PC-9 (cell line): ENCODE measurements at regions of chr17 and their contacts with region 1.

Region 1: GRCh38 chr17:19362277-19363113 is at the start of gene B9D1:
- DNase-seq: peak; percentile 83 to 93
- H3K4me3 ChIP-seq: peak within 1 kb of the TSS; percentile 86
- H3K27ac ChIP-seq: peak within 1 kb of the TSS; percentile 85
- H3K4me1 ChIP-seq: peaks cover 13% of the 10 kb centered on the region
- H3K27me3 ChIP-seq: no peaks in the 10 kb centered on the region
- CTCF ChIP-seq: peak; percentile 97
- total RNA-seq, gene B9D1: 40.2 and 58.7 TPM in 2 replicates

Region 2: DNA sequence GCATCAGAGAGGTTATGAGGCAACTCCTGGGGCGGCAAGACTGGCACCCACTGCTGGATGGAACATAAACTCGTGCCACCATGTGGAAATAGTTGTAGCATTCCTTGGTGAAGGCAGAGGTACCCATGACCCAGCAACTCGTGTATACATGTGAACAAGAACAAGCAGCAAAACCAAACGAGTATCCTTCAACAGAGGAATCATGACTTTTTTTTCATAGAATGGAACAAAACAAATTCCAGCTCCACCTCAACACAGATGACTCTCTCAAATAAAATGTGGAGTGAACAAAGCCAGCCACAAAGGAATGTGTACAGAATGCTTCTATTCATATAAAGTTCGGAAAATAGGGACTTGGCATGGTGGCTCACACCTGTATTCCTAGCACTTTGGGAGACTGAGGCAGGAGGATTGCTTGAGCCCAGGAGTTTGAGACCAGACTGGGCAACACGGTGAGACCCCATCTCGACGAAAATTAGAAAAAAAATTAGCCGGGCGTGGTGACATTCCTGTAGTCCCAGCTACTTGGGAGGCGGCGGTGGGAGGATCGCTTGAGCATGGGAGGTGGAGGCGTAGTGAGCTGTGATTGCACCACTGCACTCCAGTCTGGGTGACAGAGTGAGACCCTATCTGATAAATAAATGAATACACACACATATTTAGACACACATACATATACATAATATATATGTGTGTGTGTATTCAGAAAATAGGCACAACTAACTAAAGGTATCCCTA is 35.3 kb before region 1 on chr17:
- CTCF ChIA-PET with region 1: no interaction called
- POLR2A ChIA-PET with region 1: no interaction called
- intact Hi-C with region 1: loop called (anchors 1 kb)
- DNase-seq: peak; percentile 75 to 86
- H3K4me3 ChIP-seq: no peak overlapping the region
- H3K27ac ChIP-seq: peak overlapping the region; percentile 49
- H3K4me1 ChIP-seq: peaks cover 17% of the 10 kb centered on the region
- H3K27me3 ChIP-seq: no peaks in the 10 kb centered on the region
- CTCF ChIP-seq: no peak

Region 3: DNA sequence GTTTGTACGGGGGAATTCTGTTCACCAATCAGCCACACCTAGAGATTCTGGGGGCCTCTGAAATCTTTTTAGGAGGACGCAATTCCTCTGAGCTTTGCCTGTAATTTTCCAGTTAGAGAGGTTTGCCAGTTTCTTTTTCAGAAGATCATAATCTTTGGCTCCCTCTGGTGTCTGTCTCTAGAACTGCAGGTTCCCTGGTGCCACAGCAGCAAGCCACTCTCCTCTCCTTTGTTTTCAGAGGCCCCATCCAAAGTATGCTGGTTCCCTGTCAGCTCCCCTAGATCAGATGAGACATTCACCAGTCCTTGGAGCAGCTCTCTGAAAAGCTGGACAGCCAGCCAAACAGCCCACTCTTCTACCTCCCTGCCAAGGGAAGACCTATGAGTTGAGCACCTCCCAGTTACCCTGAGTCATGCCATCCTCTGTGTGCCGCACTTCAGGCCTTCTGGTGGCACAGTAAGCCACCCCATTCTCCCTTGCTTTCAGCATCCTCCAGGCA is 84.6 kb after region 1 on chr17:
- CTCF ChIA-PET with region 1: interaction called, 19 read pairs
- POLR2A ChIA-PET with region 1: interaction called, 8 read pairs
- intact Hi-C with region 1: loop called (anchors 1 kb)
- DNase-seq: peak; percentile 53 to 73
- H3K4me3 ChIP-seq: no peak overlapping the region
- H3K27ac ChIP-seq: no peak overlapping the region
- H3K4me1 ChIP-seq: peaks cover 24% of the 10 kb centered on the region
- H3K27me3 ChIP-seq: no peaks in the 10 kb centered on the region
- CTCF ChIP-seq: peak; percentile 98

Region 4: DNA sequence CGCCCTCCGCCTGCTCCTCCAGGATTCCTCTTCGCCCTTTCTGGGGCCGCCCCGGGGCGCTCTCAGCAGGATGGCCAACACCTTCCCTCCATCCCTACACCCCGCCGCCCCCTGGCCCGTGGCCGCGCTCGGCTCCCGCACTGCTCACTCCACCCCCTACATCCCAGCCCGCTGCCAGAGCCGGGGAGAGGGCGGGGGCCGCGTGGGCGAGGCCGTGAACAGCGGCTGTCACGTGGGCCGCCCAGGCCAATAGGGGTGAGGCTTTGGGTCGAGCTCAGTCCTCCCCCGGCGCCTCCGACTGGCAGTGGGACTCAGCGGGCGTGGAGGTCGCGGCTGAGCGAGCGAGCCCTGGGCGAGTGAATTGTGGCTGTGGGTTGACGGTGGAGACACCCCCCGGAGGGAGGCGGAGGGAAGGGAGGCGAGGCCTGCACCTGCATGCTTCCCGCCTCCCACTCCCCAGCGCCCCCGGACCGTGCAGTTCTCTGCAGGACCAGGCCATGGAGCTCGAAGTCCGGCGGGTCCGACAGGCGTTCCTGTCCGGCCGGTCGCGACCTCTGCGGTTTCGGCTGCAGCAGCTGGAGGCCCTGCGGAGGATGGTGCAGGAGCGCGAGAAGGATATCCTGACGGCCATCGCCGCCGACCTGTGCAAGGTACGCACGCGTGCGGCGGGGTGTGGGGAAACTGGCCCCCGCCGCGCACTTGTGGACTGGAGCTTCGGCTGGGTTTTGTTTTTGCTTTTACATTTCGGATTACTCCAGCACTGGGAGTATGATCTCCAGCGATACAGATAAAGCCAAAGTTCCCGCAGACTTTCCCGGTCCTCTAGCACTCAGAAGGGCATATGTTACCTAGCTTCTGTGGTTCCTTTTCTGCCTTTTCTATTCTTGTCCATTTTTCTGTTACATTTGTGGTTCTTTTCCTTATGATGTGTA is 286.2 kb after region 1 on chr17 and contains the start of gene ALDH3A2:
- CTCF ChIA-PET with region 1: interaction called, 3 read pairs
- POLR2A ChIA-PET with region 1: no interaction called
- intact Hi-C with region 1: loop called (anchors 5 kb)
- DNase-seq: peak; percentile 93 to 99
- H3K4me3 ChIP-seq: peak within 1 kb of the TSS; percentile 92
- H3K27ac ChIP-seq: peak within 1 kb of the TSS; percentile 96
- H3K4me1 ChIP-seq: peaks cover 67% of the 10 kb centered on the region
- H3K27me3 ChIP-seq: no peaks in the 10 kb centered on the region
- CTCF ChIP-seq: no peak; the same call in 1 of the 2 replicates
- total RNA-seq, gene ALDH3A2: 271 and 290 TPM in 2 replicates

Region 5: GRCh38 chr17:19753049-19753444 is 390.6 kb after region 1 on chr17:
- CTCF ChIA-PET with region 1: interaction called, 3 read pairs
- POLR2A ChIA-PET with region 1: interaction called, 3 read pairs
- intact Hi-C with region 1: loop called (anchors 5 kb)
- DNase-seq: peak; percentile 97 to 98
- H3K4me3 ChIP-seq: peak overlapping the region; percentile 52; the same call in 1 of the 2 replicates
- H3K27ac ChIP-seq: peak overlapping the region; percentile 100
- H3K4me1 ChIP-seq: peaks cover 64% of the 10 kb centered on the region
- H3K27me3 ChIP-seq: no peaks in the 10 kb centered on the region
- CTCF ChIP-seq: no peak

Region 6: DNA sequence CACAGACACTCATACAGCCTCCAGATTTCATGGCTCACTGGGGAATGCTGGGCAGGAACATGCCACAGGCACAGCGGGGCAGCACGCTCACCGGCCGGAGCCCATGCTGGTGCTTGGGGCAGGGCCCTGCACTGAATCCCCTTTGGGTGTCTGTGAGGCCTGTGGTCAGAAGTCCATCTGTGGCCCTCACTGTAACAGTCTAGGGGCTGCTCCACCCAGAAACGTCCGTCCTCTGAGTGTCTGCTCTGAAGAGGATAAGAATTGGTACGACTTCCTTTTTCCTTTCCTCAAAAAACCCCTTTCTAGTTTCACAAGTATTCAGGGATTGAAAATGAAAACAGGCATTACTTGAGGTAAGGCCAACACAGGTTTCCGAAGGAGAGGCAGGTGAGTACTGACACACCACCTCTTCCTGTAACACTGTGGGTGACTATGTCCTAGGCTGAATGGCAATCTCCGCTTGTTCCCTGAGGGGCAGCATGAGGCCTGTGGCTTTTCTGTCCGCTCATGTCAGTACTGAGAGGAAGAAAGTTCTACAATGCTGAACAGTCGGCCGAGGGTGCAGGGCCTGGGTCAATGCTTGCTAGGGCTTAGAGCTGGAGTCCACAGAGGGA is 1808.9 kb after region 1 on chr17:
- CTCF ChIA-PET with region 1: no interaction called
- POLR2A ChIA-PET with region 1: interaction called, 10 read pairs
- intact Hi-C with region 1: no loop called
- DNase-seq: no peak
- H3K4me3 ChIP-seq: no peak overlapping the region
- H3K27ac ChIP-seq: no peak overlapping the region
- H3K4me1 ChIP-seq: no peaks in the 10 kb centered on the region
- H3K27me3 ChIP-seq: no peaks in the 10 kb centered on the region
- CTCF ChIP-seq: no peak